Adrenal gland (tissue), 19 donors: ENCODE measurements at regions of chr21 and their contacts with region 1.

Region 1: DNA sequence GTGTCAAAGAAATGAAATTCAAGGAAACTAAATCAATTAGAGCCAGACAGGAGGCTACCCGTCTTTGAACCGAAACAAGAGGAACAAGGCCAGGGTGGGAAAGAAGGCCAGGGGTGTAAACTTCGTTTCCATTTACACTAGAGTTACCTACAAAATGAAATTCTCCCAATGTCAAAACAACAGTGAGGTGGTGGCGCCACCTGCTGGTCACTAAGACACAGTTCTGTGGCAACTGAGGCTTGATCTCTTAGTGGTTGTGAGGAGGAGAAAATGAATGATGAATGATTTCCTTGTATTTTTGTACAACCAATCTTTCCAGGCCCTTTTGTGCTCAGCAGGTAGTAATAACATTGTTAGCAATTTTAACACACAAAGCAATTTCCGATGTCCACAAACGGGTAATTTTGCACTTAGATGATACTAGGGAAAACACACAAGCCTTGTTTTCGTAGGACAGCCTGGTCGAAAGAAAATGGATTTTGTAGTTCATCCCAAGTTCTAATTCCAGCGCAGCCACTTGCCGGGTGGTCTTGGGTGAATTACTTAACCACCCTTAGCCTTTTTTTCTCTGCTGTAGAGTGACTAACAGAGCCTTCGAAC is 54.8 kb upstream of the SOD1 start:
- DNase-seq: peak; percentile 47 to 82 (median 68)
- H3K4me3 ChIP-seq: no peak overlapping the region
- H3K27ac ChIP-seq: no peak overlapping the region
- H3K4me1 ChIP-seq: no peaks in the 10 kb centered on the region
- H3K27me3 ChIP-seq: no peaks in the 10 kb centered on the region
- CTCF ChIP-seq: peak; percentile 80 to 93 (median 87)
- POLR2A ChIP-seq: no peak

Region 2: DNA sequence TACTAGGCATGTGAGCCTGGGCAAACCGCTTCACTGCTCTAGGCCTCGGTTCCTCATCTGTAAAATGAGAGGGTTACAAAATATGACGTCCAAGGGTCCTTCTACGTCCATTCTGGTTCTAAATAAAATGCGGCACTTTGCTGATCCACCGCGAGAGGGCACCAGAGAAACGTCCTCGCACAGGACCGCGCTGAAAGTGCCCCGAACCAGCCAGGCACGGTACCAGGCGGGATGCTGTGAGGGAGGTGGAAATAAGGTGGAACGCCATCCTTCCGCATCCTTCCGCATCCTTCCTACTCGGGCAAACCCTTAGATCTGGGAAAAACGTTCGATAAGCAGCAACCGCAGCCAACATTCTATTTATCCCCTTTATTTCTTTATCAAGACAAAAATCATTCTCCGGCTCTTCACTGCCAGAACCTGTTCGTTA is 506.1 kb before region 1 on chr21:
- intact Hi-C with region 1: loop called in 1 of 2 experiments (anchors 10 kb)
- DNase-seq: peak; percentile 38 to 90 (median 62)
- H3K4me3 ChIP-seq: no peak overlapping the region
- H3K27ac ChIP-seq: no peak overlapping the region
- H3K4me1 ChIP-seq: no peaks in the 10 kb centered on the region
- H3K27me3 ChIP-seq: no peaks in the 10 kb centered on the region
- CTCF ChIP-seq: peak; percentile 60 to 82 (median 75)
- POLR2A ChIP-seq: no peak

Region 3: DNA sequence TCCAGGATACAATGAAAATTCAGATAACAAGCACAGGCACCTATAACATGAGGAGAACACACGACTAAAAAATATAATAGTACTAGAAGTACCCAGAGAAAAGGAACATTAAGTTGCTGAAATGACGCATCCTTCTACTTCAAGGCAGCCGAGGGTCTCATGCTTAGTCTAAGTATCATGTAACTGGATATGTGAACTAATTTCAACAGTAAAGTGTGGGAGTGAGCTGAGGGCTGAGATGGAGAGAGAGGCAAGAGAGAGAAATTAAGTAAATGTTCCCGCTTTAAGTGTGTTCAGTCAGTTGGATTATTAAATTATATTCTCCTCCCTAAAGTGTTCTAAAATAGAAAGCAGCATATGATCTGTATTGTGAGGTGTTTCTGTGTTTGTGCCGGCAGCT is 414.2 kb before region 1 on chr21:
- intact Hi-C with region 1: loop called in 1 of 2 experiments (anchors 5 kb)
- DNase-seq: no peak
- H3K4me3 ChIP-seq: no peak overlapping the region
- H3K27ac ChIP-seq: no peak overlapping the region
- H3K4me1 ChIP-seq: no peaks in the 10 kb centered on the region
- H3K27me3 ChIP-seq: no peaks in the 10 kb centered on the region
- CTCF ChIP-seq: no peak
- POLR2A ChIP-seq: no peak

Region 4: GRCh38 chr21:31710586-31710985 is 105.9 kb after region 1 on chr21:
- intact Hi-C with region 1: no loop called
- DNase-seq: no peak
- H3K4me3 ChIP-seq: no peak overlapping the region
- H3K27ac ChIP-seq: no peak overlapping the region
- H3K4me1 ChIP-seq: peaks cover 2 to 52% of the 10 kb centered on the region in 2 donors
- H3K27me3 ChIP-seq: no peaks in the 10 kb centered on the region
- CTCF ChIP-seq: no peak
- POLR2A ChIP-seq: no peak